AG04449 (cell line): ENCODE measurements at regions of chr9 and their contacts with region 1.

Region 1: GRCh38 chr9:97921959-97922724 is at the start of gene TRMO:
- DNase-seq: peak; percentile 92
- H3K4me3 ChIP-seq: peak within 1 kb of the TSS; percentile 78
- CTCF ChIP-seq: peak; percentile 74

Region 2: DNA sequence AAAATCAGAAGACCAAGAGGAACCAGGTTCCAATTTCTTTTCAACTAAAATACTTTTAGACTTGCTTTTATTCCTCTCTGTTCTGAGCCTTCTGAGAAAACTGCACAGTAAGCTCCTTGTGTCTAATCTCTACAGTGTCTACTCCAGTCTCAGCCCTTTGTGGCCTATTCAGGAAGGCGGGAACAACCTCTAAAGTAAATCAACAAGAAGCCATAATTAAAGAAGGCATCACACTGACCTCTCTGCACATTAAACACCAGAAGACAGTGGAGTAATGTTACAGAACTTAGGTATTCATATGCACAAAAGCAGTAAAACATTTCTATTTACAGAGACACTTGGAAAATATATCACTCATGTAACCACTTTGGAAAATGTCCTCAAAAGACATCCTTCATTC is 239.9 kb before region 1 on chr9:
- CTCF ChIA-PET with region 1: no interaction called
- POLR2A ChIA-PET with region 1: no interaction called
- DNase-seq: no peak
- H3K4me3 ChIP-seq: no peak overlapping the region
- CTCF ChIP-seq: no peak

Region 3: GRCh38 chr9:97696803-97697601 is 225.1 kb before region 1 on chr9 and contains the start of gene XPA:
- CTCF ChIA-PET with region 1: interaction called, 18 read pairs
- POLR2A ChIA-PET with region 1: interaction called, 4 read pairs
- DNase-seq: peak; percentile 36
- H3K4me3 ChIP-seq: peak within 1 kb of the TSS; percentile 75
- CTCF ChIP-seq: no peak

Region 4: DNA sequence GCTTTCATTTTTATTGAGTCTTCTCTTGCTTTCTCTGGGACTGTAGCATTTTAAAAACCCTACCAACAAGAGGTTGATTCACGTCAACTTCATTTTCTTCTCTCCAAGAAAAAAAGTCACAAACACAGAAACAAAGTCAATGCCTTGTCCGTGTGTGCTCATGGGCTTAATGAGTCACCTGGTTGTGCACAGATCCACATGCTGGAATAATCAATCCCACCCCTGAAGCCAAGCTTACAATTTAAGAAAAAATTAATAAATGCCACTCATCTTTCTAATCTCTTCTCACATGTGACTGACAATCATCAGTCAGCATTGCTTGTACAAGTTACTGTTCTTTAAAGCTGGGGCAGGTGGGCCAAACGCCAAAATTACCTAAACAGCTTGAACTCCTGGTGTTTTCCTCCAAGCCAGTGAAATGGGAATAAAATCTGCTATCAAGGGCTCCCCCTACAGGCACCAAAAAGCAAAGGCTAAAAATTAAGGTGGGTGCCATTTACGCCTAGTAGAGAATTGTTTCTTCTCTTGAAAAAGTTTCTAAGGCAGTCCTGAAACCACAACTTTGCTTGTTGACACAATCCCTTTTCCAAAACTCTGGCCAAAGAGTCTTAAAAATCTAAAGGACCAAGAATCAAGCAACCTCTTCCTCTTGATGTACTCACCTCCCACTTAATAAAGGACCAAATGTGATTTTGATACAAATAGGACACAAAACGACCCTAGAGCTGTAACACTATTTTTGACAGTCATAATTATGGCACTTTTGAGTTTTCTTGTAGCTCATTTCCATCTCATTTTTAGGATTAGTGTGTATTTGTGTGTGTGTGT is 21.2 kb before region 1 on chr9:
- CTCF ChIA-PET with region 1: interaction called, 62 read pairs
- POLR2A ChIA-PET with region 1: interaction called, 3 read pairs
- DNase-seq: no peak
- H3K4me3 ChIP-seq: no peak overlapping the region
- CTCF ChIP-seq: peak; percentile 55

Region 5: GRCh38 chr9:97943308-97943855 is 21.2 kb after region 1 on chr9:
- CTCF ChIA-PET with region 1: interaction called, 28 read pairs
- POLR2A ChIA-PET with region 1: no interaction called
- DNase-seq: no peak
- H3K4me3 ChIP-seq: no peak overlapping the region
- CTCF ChIP-seq: no peak

Region 6: DNA sequence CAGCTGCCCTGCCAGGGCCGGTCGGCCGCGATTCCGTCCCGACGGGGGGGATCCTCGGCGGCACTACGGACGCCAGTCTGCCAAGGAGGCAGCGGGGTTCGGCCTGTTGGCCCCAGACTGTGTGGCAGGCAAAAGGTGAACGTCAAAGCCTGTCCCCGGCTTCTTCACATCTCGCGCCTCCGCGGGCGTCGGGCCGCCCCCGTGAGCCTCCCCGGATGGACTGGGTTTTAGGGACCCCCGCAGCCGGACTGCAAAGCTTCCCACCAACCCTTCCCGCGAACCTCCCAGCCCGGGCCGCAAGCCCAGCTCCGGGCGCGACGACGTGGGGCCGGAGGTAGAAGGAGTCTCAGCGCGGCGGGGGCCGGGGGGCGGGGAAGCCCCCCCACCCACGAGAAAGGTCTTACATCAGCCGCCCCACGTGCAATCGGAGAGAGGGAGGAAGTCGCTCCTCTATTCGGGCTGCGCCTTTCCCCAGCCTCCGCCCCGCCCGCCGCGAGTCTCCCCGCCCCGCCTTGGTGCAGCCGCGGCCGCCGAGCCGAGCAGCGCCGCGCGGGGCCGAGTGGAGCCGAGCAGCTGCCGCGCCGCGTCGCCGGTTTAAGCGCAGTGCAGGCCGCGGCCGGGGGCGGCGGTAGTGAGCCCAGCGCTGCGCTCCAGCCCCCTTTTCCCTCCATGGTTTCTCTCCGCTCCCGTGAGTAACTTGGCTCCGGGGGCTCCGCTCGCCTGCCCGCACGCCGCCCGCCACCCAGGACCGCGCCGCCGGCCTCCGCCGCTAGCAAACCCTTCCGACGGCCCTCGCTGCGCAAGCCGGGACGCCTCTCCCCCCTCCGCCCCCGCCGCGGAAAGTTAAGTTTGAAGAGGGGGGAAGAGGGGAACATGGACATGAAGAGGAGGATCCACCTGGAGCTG is 60.8 kb after region 1 on chr9 and contains the start of gene ANP32B:
- CTCF ChIA-PET with region 1: interaction called, 50 read pairs
- POLR2A ChIA-PET with region 1: interaction called, 3 read pairs
- DNase-seq: peak; percentile 36
- H3K4me3 ChIP-seq: peak within 1 kb of the TSS; percentile 84
- CTCF ChIP-seq: peak; percentile 88

Region 7: DNA sequence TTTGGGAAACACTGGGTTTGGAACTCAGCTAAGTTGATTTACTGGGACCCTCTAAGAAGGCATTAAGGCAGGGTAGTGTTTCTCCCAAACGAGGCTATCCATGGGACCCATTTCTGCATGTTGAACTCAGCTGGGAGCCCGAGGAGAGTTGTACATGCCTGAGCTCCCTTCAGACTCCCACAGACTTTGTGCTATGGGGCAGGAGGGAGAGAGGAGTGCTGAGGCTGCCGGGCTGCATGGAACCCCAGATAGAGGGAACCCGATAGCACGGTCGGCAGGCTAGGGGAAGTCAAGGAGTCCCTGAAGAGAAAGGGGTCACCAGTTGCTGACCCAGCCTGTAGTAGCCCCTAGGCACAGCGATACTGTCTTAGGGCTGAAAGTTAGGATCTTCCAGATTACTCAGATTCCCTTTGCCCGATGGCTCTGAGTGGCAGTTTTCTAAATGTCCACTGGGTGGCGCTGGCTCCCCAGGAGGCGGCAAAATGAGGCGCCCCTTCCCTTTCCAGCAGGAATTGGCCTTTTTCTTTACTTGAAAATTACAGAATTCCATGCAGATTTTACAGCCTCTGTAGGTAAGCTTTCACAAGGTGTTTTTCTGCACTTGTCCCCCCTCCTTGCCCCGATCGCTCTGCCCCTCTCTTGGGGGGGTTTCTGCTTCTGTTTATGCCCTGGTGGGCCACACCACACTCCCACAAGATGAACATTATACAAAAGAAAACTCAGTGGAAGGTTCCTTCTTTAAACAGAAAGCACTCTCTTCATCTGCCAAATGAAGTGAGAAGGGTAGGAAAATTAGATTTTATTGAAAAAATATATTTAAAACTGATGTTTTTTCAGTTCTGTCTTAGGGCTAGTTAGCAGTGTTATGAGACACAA is 152.2 kb after region 1 on chr9:
- CTCF ChIA-PET with region 1: interaction called, 19 read pairs
- POLR2A ChIA-PET with region 1: no interaction called
- DNase-seq: no peak
- H3K4me3 ChIP-seq: no peak overlapping the region
- CTCF ChIP-seq: peak; percentile 79

Region 8: GRCh38 chr9:98263482-98264357 is 341.6 kb after region 1 on chr9:
- CTCF ChIA-PET with region 1: interaction called, 50 read pairs
- POLR2A ChIA-PET with region 1: no interaction called
- DNase-seq: peak; percentile 29
- H3K4me3 ChIP-seq: no peak overlapping the region
- CTCF ChIP-seq: peak; percentile 96